Aorta (tissue), 5 donors: ENCODE measurements at regions of chr5 and their contacts with region 1.

Region 1: DNA sequence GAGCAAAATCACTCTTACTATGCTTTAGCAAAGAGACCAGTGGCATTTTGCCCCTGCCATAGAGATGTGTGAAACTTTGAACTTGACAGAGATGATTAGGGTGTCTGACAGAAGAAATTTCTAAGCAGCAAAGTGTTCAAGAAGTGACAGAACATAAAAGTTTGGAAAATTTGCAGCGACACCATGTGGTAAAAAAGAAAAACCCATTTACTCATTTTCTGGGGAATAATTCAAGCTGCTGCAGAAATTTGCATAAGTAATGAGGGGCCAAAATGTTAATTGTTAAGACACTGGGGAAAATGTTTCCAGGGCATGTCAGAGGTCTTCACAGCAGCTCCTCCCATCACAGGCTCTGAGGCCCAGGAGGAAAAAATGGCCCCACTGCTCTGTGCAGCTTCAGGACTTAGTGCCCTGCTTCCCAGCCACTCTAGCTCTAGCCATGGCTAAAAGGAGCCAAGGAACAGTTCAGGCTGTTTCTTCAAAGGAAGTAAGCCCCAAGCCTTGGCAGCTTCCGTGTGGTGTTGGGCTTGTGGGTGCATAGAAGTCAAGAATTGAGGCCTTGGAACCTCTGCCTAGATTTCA is 6.1 kb upstream of the AP3B1 start:
- DNase-seq: no peak
- ATAC-seq: no peak
- H3K4me3 ChIP-seq: no peak overlapping the region
- H3K27ac ChIP-seq: no peak overlapping the region
- H3K4me1 ChIP-seq: no peaks in the 10 kb centered on the region
- H3K27me3 ChIP-seq: no peaks in the 10 kb centered on the region

Region 2: DNA sequence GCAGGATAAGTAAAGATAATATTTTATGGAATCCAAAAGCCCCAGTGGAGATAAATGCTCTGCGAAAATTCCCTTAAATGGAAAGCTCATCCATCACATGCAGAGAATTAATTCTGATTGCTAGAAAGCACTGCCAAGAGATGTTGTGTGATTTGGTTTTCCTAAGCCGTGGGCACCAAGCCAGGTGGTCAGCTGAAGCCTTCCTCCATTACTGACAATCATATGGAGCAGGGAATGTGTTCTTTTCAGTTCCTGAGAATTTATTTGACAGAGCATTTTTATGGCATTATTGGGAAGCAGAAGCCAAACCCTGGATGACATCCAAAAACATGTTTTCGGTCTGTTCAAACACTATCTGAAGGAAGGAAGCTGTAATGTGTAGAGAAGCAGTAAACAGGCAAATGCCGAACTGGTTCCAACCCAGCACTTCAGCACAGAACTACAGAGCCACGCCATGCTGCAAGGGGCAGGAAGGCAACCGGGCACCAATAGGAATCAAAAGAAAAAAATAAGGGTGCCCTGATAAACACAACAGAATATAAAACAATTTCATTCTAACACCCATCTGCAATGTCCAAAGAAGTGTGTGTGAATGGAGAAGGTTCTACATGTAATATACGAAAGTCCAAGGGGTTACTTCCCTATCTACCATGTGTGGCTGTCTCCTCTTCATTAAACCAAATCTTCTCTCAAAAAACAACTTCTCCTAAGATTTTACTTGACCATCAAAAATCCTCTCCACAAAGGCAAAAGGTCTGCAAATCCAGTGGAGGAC is 672.3 kb after region 1 on chr5:
- intact Hi-C with region 1: loop called in 1 of 2 experiments (anchors 10 kb)
- DNase-seq: peak in 1 of 2 donors; percentile 50
- ATAC-seq: no peak
- H3K4me3 ChIP-seq: no peak overlapping the region
- H3K27ac ChIP-seq: no peak overlapping the region
- H3K4me1 ChIP-seq: peaks cover 0 to 1% of the 10 kb centered on the region in 2 donors
- H3K27me3 ChIP-seq: no peaks in the 10 kb centered on the region